ENCODE measurements at regions of chr15 and their contacts with region 1.

Region 1: GRCh38 chr15:33846867-33847266 is 121.4 kb upstream of the CHRM5 start:
- DNase-seq: no peak
- ATAC-seq: no peak
- H3K4me3 ChIP-seq: no peak overlapping the region
- H3K27ac ChIP-seq: no peak overlapping the region
- H3K4me1 ChIP-seq: no peaks in the 10 kb centered on the region
- H3K27me3 ChIP-seq: no peaks in the 10 kb centered on the region
- CTCF ChIP-seq: no peak

Region 2: GRCh38 chr15:33559207-33559890 is 287.5 kb before region 1 on chr15:
- intact Hi-C with region 1: no loop called
- DNase-seq: no peak
- ATAC-seq: peak in 2 of 4 donors; percentile 23 to 82
- H3K4me3 ChIP-seq: no peak overlapping the region
- H3K27ac ChIP-seq: no peak overlapping the region
- H3K4me1 ChIP-seq: no peaks in the 10 kb centered on the region
- H3K27me3 ChIP-seq: no peaks in the 10 kb centered on the region
- CTCF ChIP-seq: no peak

Region 3: DNA sequence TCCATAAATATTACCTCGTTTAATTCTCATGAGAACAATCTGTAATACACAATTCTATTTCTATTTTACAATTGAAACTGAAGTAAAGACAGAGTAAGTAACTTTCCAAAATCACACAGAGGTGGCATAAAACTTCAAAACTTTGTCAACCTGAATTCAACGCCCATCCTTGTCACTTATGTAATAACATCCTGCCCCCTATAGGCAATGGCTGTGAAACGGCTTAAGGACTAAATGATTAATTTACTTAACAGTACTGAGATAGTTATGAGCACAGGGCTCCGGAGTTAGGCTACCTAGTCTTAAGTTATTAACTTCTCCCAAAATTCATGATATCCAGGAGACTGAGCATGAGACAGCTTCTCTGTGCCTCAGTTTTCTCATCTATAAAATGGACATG is 171.6 kb before region 1 on chr15:
- intact Hi-C with region 1: no loop called
- DNase-seq: no peak
- ATAC-seq: no peak
- H3K4me3 ChIP-seq: no peak overlapping the region
- H3K27ac ChIP-seq: no peak overlapping the region
- H3K4me1 ChIP-seq: peaks cover 9% of the 10 kb centered on the region
- H3K27me3 ChIP-seq: no peaks in the 10 kb centered on the region
- CTCF ChIP-seq: peak; percentile 36

Region 4: DNA sequence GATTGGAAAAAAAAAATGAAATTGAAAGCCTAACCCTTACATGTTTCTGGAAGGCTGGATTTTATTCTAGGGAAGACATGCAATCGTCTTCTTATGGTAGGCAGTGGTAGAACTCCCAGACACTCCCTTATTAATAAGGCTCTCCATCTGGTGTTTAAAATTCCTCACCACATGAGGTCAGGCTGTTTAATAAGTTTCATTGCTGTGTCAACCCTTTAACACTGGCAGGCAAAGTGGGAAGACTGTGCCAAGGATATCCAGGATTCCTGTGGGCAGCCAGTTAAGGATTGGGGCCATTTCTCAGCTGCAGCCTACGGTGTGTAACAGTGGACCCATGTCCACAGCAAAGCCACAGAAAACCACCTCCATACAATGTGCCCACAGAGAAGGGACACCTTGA is 104.1 kb before region 1 on chr15:
- intact Hi-C with region 1: no loop called
- DNase-seq: no peak
- ATAC-seq: peak; percentile 79 to 91 (median 88)
- H3K4me3 ChIP-seq: no peak overlapping the region
- H3K27ac ChIP-seq: peak overlapping the region; percentile 51
- H3K4me1 ChIP-seq: peaks cover 13% of the 10 kb centered on the region
- H3K27me3 ChIP-seq: no peaks in the 10 kb centered on the region
- CTCF ChIP-seq: no peak

Region 5: DNA sequence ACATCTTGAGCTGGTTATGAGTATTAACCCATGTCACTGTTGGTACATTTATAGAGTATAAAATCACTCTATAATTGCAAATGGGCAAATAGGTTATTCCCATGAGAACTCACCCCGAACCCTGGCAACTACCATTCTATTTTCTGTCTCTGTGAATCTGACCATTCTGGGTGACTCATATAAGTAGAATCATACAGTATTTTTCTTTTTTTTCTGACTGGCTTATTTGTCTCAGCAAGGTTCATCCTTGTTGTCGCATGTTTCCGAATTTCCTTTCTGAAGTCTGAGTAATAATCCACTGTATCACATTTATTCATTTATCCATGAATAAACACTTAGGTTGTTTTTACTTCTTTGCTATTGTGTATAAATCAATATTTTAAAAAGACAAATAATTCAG is 61.5 kb after region 1 on chr15:
- intact Hi-C with region 1: loop called in 1 of 2 experiments (anchors 10 kb)
- DNase-seq: no peak
- ATAC-seq: no peak
- H3K4me3 ChIP-seq: no peak overlapping the region
- H3K27ac ChIP-seq: no peak overlapping the region
- H3K4me1 ChIP-seq: peaks cover 5% of the 10 kb centered on the region
- H3K27me3 ChIP-seq: no peaks in the 10 kb centered on the region
- CTCF ChIP-seq: no peak

Measured in psoas muscle (tissue), 8 donors.